Gastrocnemius medialis (tissue), 4 donors: ENCODE measurements at regions of chr16 and their contacts with region 1.

Region 1: DNA sequence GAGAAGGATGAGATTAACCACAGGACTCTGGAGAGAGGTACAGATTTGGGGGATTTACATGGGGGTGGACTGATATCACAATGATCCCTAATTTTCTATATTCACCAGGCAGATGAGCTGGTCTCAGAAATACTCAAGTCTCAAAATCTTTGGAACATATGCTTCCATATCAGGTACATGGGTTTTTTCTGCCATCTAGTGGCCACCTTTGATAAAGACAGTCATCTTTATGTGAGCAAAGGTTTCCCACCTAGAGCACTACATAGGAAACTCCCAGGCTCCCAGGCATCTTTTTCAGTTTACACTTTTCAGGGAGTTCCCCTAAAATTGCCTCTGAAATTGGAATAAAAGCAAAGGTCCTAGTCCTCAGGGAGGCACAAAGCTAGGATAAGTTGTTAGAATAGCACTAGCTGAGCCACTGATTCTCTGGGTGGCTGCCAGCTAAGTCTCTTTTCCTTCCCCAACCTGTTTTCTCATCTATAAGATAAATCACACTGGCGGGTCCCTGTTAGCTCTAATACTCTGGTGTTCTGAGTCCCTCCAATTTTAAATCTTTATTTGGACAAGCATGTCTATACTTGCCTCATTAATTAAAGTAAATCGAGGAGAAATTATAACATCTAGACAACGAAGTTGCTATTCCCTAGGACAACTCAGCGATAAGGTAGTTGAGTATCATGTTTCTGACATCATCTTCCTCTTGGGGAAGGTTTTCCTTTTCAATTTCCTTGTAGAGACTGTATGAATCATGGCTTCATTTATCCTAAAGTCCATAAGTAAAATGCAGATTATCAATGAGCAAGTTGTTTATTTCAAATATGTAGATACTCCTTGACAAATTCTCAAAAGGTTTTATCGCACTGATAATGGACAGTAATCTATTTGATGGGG is 19.0 kb upstream of the MON1B start:
- DNase-seq: no peak
- ATAC-seq: peak; percentile 55 to 63
- H3K4me3 ChIP-seq: no peak overlapping the region
- H3K27ac ChIP-seq: no peak overlapping the region
- H3K4me1 ChIP-seq: no peaks in the 10 kb centered on the region
- H3K27me3 ChIP-seq: no peaks in the 10 kb centered on the region
- CTCF ChIP-seq: peak; percentile 41 to 73 (median 60)
- POLR2A ChIP-seq: no peak

Region 2: DNA sequence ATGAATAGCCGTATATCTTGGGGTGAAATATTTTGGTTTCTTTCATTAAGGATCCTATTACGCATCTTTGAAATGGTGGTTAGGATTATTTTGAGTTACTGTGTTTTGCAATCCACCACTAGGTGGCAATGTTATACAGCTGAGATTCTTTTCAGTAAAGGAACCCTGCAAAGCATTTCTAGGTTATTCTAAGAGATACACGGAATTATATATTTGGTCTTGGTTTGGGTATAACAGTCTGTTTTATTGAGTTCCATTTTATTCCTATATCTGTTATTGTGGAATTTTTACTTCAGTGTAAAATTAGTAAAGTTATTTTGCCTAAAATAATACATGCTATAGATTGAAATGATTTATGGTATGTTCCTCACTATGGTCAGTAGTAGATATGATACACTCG is 1382.8 kb before region 1 on chr16:
- in situ Hi-C with region 1: loop called (anchors 5 to 25 kb)
- intact Hi-C with region 1: loop called (anchors 1 kb)
- DNase-seq: no peak
- ATAC-seq: no peak
- H3K4me3 ChIP-seq: no peak overlapping the region
- H3K27ac ChIP-seq: no peak overlapping the region
- H3K4me1 ChIP-seq: no peaks in the 10 kb centered on the region
- H3K27me3 ChIP-seq: peaks cover 0 to 3% (median 0%) of the 10 kb centered on the region in 3 donors
- CTCF ChIP-seq: peak in 4 of 5 experiments; percentile 51 to 74 (median 64)
- POLR2A ChIP-seq: no peak

Region 3: DNA sequence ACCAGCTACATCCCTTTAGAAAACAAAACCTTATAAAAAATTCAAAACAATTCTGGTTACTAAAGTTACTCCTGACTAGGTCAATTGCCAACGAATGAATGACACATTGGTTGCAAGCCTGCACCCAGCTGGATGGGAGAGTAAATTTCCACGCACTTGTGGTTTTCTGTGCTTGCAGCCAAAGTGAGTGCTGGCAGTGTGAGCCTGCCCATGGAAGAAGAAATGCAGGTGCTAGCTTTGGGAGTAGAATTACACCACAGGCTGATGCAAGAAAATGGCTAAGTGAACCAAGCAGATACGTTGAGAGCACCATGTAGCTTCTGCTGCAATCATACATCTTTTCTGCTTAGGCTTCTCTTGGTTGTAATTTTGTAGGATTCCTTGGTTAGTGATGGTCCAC is 101.8 kb after region 1 on chr16:
- in situ Hi-C with region 1: no loop called
- intact Hi-C with region 1: no loop called
- DNase-seq: no peak
- ATAC-seq: no peak
- H3K4me3 ChIP-seq: no peak overlapping the region
- H3K27ac ChIP-seq: no peak overlapping the region
- H3K4me1 ChIP-seq: no peaks in the 10 kb centered on the region
- H3K27me3 ChIP-seq: no peaks in the 10 kb centered on the region
- CTCF ChIP-seq: no peak
- POLR2A ChIP-seq: no peak